ENCODE measurements at regions of chr2 and their contacts with region 1.

Region 1: GRCh38 chr2:38377050-38377828 is at the start of gene ATL2:
- DNase-seq: peak; percentile 94
- H3K4me3 Mint-ChIP-seq: peak within 1 kb of the TSS; percentile 87
- H3K27ac Mint-ChIP-seq: peak within 1 kb of the TSS; percentile 92
- H3K4me1 Mint-ChIP-seq: peaks cover 56% of the 10 kb centered on the region
- H3K27me3 Mint-ChIP-seq: no peaks in the 10 kb centered on the region
- total RNA-seq, gene ATL2: 57.1 and 57.7 TPM in 2 replicates

Region 2: DNA sequence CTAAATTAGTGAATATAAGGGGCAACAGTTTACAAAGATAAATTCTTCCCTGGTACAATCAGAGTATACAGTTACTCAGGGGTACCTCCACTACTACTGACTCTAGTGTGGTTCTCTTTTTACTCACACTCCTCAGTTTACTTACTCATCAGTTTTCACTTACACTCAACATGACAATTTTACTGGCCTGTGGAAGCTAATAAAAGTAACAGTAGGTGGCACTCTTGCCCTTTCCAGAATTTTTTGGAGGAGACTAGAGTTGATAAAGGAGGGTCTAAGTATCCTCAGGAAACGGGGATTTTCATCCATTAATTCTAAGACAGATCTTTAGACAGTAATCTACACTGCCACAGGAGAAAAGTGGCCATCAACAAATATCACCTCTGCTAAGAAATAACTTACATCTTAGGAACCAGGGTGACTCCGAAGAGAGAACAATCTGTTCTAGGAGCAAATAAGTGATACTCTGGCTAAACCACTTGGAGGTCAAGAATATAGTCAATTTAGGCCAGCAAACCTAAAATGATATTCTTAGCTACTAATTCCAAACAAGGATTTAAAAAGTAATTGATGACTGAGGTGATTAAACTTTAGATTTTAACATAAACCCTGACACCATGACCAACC is 61.4 kb before region 1 on chr2:
- intact Hi-C with region 1: loop called (anchors 2 kb)
- DNase-seq: no peak
- H3K4me3 Mint-ChIP-seq: no peak overlapping the region
- H3K27ac Mint-ChIP-seq: no peak overlapping the region
- H3K4me1 Mint-ChIP-seq: peaks cover 21% of the 10 kb centered on the region
- H3K27me3 Mint-ChIP-seq: no peaks in the 10 kb centered on the region

Region 3: DNA sequence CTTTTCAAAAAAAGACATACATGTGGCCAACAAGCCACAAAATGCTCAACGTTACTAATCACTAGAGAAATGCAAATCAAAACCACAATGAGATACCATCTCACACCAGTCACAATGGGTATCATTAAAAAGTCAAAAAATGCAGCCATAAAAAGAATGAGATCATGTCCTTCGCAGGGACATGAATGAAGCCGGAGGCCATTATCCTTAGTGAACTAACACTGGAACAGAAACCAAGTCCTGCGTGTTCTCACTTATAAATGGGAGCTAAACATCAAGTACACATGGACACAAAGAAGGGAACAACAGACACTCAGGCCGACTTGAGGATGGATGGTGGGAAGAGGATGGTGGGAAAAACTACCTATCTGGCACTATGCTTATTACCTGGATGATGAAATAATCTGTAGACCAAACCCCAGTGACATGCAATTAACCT is 17.7 kb after region 1 on chr2:
- intact Hi-C with region 1: loop called (anchors 2 kb)
- DNase-seq: no peak
- H3K4me3 Mint-ChIP-seq: no peak overlapping the region
- H3K27ac Mint-ChIP-seq: peak overlapping the region; percentile 23
- H3K4me1 Mint-ChIP-seq: peaks cover 20% of the 10 kb centered on the region
- H3K27me3 Mint-ChIP-seq: peaks cover 18% of the 10 kb centered on the region

Region 4: DNA sequence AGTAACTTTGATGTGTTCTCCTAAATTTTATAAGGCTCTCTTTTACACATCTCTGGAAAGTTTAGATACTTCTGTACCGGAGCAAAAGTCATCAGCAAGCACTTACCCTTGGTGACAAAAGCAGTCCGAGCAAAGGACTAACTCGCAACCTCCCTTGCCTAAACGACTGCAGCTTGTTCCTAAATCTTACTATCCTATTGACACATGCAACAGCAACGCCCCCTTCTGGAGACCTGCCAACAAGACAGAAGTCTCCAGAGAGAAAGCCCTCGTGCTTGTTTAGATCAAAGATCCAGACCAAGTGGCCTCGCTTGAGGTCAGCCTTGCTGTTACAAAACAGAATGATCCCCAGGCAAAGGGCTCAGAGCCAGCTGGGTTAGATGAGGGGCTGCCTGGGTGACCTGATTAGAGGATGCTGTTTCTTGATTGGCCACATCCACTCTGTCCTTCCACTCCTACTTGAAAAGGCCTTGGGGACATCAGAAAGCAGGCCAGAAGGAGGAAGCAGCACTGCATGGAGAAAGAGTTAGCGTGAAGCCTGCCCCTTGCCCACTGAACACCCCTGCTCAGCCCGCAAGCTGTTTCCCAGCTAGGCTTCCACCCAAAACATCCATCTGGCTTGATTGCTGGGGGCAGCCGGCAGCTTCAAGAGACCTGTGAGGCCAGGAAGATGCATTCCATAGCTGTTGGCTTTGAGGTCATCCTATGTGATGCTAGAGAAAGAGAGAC is 131.2 kb after region 1 on chr2:
- intact Hi-C with region 1: loop called (anchors 1 kb)
- DNase-seq: peak; percentile 63
- H3K4me3 Mint-ChIP-seq: no peak overlapping the region
- H3K27ac Mint-ChIP-seq: no peak overlapping the region
- H3K4me1 Mint-ChIP-seq: peaks cover 10% of the 10 kb centered on the region
- H3K27me3 Mint-ChIP-seq: peaks cover 11% of the 10 kb centered on the region

Measured in activated T-helper 2 cell treated with anti-CD3 and anti-CD28 coated beads, Interferon-gamma antibody, Interleukin-2, Interleukin-4, amounts not matched to agents 10 μg/mL and 5 μg/mL and 100 μg/mL, durations not matched to agents 14 hours and 24 hours and 36 hours (primary cell).